ENCODE measurements at regions of chr12 and their contacts with region 1.

Region 1: DNA sequence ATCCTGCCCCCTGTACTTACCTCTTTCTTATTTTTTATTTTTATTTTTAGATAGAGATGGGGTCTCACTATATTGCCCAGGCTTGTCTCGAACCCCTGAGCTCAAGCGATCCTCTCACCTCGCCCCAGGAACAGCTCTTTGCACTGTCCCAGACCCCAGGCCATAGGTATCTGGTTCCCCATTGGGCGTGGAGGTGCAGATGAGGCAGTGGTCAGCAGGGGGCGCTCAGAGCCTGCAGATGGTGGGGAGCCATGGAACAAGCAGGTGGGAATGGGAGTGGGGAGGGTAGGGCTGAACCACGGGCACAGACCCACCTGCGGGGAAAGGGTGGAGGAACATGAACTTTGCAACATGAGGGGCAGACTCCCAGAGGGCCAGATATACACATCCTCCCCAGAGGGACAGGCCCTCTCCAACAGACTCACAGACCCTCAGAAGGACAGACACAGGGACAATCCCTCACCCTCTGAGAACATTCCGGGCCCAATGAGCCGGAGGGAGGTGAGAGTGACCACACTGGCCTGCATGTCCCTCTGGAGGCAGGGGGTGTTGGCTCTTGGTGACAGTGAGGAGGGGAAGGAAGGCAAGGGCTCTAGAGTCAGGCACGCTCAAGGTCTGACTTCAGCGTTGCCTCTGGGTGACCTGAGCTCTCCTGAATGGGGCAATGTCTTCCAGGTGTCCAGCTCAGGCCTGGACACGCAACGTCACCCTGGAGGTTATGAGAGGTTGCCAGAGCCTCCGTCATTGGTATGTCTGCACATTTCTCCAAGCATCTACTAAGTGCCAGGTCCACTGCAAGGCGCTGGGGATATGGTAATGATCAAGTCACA is 34.9 kb downstream of the KRT80 start:
- DNase-seq: peak; percentile 94
- ATAC-seq: peak; percentile 88
- H3K4me3 Mint-ChIP-seq: no peak overlapping the region
- H3K27ac Mint-ChIP-seq: no peak overlapping the region
- H3K4me1 Mint-ChIP-seq: no peaks in the 10 kb centered on the region
- H3K27me3 Mint-ChIP-seq: no peaks in the 10 kb centered on the region
- CTCF ChIP-seq: peak; percentile 97

Region 2: GRCh38 chr12:52032804-52033502 is 124.0 kb before region 1 on chr12:
- CTCF ChIA-PET with region 1: interaction called, 10 read pairs
- POLR2A ChIA-PET with region 1: no interaction called
- DNase-seq: peak; percentile 97
- ATAC-seq: peak; percentile 93
- H3K4me3 Mint-ChIP-seq: peak overlapping the region; percentile 69
- H3K27ac Mint-ChIP-seq: peak overlapping the region; percentile 95
- H3K4me1 Mint-ChIP-seq: peaks cover 31% of the 10 kb centered on the region
- H3K27me3 Mint-ChIP-seq: peaks cover 46% of the 10 kb centered on the region
- CTCF ChIP-seq: no peak

Region 3: DNA sequence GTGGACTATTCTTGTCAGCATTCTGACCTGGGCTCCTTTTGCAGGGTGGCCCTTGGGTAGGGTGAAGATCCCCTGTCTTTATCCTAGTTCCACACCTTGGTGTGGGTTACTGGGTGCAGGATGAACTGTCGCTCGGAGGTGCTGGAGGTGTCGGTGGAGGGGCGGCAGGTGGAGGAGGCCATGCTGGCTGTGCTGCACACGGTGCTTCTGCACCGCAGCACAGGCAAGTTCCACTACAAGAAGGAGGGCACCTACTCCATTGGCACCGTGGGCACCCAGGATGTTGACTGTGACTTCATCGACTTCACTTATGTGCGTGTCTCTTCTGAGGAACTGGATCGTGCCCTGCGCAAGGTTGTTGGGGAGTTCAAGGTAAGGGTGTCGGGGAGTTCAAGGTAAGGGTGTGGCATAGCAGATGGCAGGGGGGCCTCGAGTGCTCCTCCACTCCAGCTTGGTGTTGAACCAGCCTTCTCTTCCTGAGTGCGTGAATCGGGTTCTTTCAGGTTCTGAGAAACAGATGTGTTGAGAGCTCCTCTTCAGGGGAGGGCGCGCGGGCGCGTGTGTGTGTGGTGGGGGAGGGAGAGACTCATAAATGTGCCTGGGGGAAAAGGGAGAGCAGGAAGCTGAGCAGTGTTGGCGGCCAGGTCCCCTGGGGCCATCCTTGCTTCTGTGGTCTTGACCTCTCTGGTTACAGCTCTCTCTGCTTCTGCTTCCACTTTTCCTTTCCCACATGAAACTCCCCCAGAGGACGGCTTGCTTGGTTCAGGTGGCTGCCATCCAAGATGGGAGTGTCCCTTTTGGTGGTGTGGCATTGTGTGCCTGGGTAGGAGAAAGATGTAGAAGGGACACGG is 83.2 kb before region 1 on chr12:
- CTCF ChIA-PET with region 1: no interaction called
- POLR2A ChIA-PET with region 1: no interaction called
- DNase-seq: no peak
- ATAC-seq: no peak
- H3K4me3 Mint-ChIP-seq: no peak overlapping the region
- H3K27ac Mint-ChIP-seq: no peak overlapping the region
- H3K4me1 Mint-ChIP-seq: peaks cover 14% of the 10 kb centered on the region
- H3K27me3 Mint-ChIP-seq: 0 out of 2 replicates have a peak, but pooled peaks cover 3% of the 10 kb centered on the region
- CTCF ChIP-seq: no peak

Region 4: DNA sequence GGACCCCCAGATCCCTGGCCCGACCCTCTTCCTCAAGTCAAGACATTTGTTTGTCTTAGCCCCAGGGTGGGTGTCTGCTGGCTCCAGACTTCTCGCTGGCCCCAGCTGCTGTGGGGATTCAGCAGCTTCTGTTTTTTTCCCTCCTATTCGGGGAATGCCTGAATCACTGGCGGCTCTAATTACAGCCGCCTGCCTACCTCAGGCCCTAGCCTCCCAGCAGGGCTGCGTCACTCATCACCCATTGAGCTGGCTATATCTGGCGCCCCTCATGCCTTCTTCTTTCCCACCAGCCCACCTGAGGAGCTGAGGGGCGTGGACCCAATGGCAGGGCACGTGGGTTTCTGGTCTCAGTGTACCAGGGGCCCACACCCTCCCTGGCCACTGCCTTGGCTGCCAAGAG is 24.8 kb after region 1 on chr12:
- CTCF ChIA-PET with region 1: interaction called, 25 read pairs
- POLR2A ChIA-PET with region 1: no interaction called
- DNase-seq: peak; percentile 36
- ATAC-seq: peak; percentile 68
- H3K4me3 Mint-ChIP-seq: no peak overlapping the region
- H3K27ac Mint-ChIP-seq: peak overlapping the region; percentile 69; the same call in 1 of the 2 replicates
- H3K4me1 Mint-ChIP-seq: peaks cover 32% of the 10 kb centered on the region
- H3K27me3 Mint-ChIP-seq: no peaks in the 10 kb centered on the region; the same call in 1 of the 2 replicates
- CTCF ChIP-seq: no peak

Region 5: DNA sequence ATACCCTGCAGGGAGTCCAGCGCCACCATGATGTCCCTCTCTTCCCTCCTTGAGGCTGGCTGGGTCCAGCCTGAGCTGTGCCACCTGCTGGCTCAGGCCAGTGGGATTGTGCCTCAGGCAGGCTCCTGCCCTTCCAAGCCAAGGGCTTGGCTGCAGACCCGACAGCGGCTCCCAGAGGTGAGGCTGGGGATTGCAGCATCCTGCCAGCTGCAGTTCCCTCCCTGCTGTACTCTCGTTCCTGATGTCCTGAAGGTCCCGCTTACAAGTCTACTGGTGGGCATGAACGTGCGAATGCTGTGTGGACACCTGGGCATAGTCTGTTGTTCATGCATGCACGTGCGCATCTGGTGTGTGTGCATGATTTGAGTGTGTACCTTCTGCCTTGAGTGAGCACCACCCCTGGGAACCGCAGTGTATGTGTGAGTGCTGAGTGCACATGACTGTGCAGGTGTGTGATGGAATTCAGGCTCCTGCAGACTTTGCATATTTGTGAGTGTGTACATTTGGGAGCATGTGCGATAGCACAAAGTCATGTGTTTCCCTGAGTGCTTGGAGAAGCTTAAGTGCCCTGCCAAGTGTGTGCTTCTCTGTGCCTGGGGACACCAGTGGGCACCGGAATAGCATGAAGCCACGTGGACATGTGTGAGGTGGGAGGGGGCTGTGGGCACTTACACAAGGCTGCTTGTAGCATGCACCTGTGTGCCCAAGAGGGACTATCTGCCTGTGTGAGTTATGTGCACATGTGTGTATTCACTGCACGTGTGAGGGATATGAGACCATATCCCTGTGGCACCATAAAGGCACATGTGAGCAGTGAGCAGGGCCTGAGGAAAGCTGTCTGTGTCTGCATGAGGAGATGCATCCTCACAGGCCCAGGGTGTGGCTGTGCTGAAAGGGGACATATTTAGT is 56.8 kb after region 1 on chr12:
- CTCF ChIA-PET with region 1: interaction called, 60 read pairs
- POLR2A ChIA-PET with region 1: no interaction called
- DNase-seq: peak; percentile 96
- ATAC-seq: peak; percentile 86
- H3K4me3 Mint-ChIP-seq: no peak overlapping the region
- H3K27ac Mint-ChIP-seq: no peak overlapping the region
- H3K4me1 Mint-ChIP-seq: peaks cover 12% of the 10 kb centered on the region
- H3K27me3 Mint-ChIP-seq: no peaks in the 10 kb centered on the region
- CTCF ChIP-seq: peak; percentile 81

Region 6: DNA sequence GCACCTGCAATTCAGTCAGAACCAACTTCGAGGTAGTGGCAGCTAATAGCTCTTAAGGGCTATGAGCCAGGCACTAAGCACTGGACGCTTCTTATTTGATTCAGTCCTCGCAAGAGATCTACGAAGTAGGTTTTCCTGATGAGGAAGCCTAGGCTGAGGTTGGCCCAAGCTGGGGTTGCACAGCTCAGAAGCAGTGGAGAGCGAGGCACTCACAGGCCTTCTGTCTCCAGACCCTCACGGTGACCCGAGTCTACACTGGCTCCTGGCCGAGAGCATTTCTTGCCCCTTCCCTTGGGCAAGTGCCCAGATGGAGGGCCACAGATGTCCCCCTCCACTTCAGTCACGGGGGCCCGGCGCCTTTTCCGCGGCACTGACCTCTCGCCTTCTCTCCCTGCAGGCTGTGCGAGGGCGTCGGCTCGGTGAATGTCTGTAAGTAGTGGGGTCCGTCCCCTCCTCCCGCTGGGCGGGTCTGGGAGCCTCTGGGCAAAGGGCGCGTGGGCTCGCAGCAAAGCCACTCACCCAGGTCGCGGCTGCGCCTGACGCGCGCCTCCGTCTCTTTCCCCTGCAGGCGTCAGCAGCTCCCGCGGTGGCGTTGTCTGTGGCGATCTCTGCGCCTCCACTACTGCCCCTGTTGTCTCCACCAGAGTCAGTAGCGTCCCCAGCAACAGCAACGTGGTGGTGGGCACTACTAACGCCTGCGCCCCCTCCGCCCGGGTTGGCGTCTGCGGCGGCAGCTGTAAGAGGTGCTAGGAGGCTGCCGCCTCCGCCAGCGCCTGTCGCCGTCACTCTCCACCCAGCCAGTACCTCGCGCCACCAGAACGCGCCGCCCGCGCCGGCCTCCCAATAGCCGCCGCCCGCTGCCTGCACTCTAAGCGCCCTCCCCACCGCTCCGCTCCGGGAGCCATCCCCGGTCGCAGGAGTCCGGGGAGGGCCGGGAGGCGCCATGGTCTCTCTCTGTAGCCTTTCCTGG is 151.2 kb after region 1 on chr12:
- CTCF ChIA-PET with region 1: interaction called, 15 read pairs
- POLR2A ChIA-PET with region 1: no interaction called
- DNase-seq: peak; percentile 77
- ATAC-seq: peak; percentile 86
- H3K4me3 Mint-ChIP-seq: peak overlapping the region; percentile 76
- H3K27ac Mint-ChIP-seq: no peak overlapping the region
- H3K4me1 Mint-ChIP-seq: peaks cover 17% of the 10 kb centered on the region
- H3K27me3 Mint-ChIP-seq: peaks cover 57% of the 10 kb centered on the region
- CTCF ChIP-seq: no peak